ENCODE measurements at regions of chr3 and their contacts with region 1.

Region 1: DNA sequence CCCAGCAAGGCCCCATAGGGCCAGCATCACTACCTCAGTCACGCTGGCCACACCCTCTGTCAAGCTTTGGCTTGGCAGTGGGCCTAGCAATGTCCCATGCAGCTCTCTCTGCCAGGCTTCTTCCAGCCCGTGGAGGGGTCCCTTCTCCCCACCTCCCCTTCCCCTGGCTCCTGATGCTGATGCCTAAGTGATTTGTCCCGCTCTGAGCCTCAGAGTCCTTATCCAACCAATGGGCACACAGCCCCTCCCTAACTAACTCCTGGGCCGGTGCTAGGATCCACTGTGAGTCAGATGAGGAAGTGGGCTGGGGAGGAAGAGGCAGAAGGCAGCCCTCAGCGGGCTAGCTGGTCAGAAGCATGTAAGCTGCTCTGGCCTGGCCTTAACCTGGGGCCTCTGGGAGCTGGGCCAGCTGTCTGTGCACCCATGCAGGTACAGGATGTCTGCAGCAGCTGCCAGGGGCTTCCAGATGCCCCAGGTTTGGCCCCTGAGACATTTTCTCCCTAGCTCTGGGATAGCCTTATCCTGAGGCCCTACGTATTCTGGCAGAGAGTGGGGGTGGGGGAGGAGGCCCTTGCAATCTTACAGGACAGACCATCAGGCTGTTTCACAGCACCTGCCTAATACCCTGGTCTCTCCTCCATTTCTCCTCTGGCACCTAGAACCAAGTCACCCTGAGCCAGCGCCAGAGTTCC is 740 bp upstream of the ZBTB47 start:
- DNase-seq: peak; percentile 29
- ATAC-seq: peak; percentile 32
- H3K4me3 ChIP-seq: peak overlapping the region; percentile 71 to 89 (median 83); a peak in 5 of 6 replicates
- H3K27ac ChIP-seq: no peak overlapping the region
- H3K4me1 ChIP-seq: peaks cover 57% of the 10 kb centered on the region
- H3K27me3 ChIP-seq: no peaks in the 10 kb centered on the region
- CTCF ChIP-seq: no peak
- EP300 ChIP-seq: no peak
- POLR2A ChIP-seq: no peak
- RAD21 ChIP-seq: no peak

Region 2: GRCh38 chr3:42732829-42733459 is 80.2 kb after region 1 on chr3:
- CTCF ChIA-PET with region 1: no interaction called
- POLR2A ChIA-PET with region 1: no interaction called
- in situ Hi-C with region 1: no loop called
- intact Hi-C with region 1: loop called (anchors 5 kb)
- DNase-seq: peak; percentile 81
- ATAC-seq: peak; percentile 91
- H3K4me3 ChIP-seq: peak overlapping the region in 1 of 3 experiments; percentile 22; a peak in 2 of 6 replicates
- H3K27ac ChIP-seq: peak overlapping the region; percentile 97
- H3K4me1 ChIP-seq: peaks cover 64% of the 10 kb centered on the region
- H3K27me3 ChIP-seq: no peaks in the 10 kb centered on the region
- CTCF ChIP-seq: peak; percentile 77
- EP300 ChIP-seq: peak in 1 of 2 experiments; percentile 20; a peak in 1 of 4 replicates
- POLR2A ChIP-seq: no peak; a peak in 2 of 4 replicates
- RAD21 ChIP-seq: peak; percentile 71